ENCODE measurements at regions of chr10 and their contacts with region 1.

Region 1: GRCh38 chr10:70925377-70926225 is 37.2 kb upstream of the PCBD1 start:
- DNase-seq: peak; percentile 87
- H3K4me3 Mint-ChIP-seq: no peak overlapping the region
- H3K27ac Mint-ChIP-seq: no peak overlapping the region
- H3K4me1 Mint-ChIP-seq: peaks cover 6% of the 10 kb centered on the region
- H3K27me3 Mint-ChIP-seq: peaks cover 4% of the 10 kb centered on the region

Region 2: DNA sequence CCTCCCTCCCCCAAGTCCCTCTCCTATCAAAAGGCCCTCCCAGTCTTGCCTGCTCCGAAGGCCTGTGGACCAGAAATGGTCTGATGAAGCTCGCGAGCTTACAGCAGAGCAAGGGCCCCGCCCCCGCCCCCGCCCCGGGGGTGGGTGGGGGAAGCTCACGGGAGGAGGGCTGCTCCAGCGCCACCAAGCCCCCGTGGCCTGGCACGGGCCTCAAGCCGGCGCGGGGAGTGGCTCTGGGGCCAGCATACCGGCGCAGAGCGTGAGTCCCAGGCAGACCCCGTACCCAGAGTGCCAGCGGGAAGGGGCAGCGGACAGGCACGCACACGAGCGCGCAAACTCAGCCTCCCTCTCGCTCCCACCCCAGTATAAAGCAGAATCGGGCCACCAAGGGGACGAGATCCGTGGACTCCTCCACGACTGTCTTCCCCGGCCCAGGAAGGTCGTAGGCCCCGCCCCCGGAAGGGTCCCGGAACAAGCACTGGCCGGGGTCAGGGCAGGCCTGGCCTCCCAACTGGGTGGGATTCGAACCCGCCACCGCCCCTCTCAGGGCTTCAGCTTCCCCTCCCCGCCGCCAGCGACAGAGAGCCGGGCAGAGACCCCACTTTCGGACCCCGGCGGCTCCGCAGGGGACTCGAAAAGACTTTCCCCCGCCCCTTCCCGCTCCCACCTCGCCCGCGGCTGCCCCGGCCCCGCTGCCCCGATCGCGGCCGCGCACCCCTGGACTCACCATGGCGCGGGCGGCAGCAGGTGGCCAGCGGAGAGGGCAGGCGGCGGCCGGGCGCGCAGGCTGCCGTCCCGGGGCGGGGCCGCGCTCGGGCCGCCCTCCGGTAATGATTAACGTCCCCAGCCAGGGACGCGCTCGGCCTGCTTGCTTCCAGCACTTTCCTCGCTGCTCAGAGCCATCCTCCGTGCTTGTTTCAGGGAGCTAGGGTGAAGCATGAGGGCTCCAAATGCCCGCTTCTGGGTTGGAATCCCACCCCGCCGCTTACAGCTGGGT is 37.5 kb before region 1 on chr10 and contains the start of gene PCBD1:
- intact Hi-C with region 1: no loop called
- DNase-seq: peak; percentile 94
- H3K4me3 Mint-ChIP-seq: peak within 1 kb of the TSS; percentile 82
- H3K27ac Mint-ChIP-seq: peak within 1 kb of the TSS; percentile 88
- H3K4me1 Mint-ChIP-seq: peaks cover 23% of the 10 kb centered on the region
- H3K27me3 Mint-ChIP-seq: no peaks in the 10 kb centered on the region
- total RNA-seq, gene PCBD1: 63.2 and 67.7 TPM in 2 replicates

Region 3: GRCh38 chr10:70940834-70941568 is 15.4 kb after region 1 on chr10:
- intact Hi-C with region 1: no loop called
- DNase-seq: no peak
- H3K4me3 Mint-ChIP-seq: no peak overlapping the region
- H3K27ac Mint-ChIP-seq: no peak overlapping the region
- H3K4me1 Mint-ChIP-seq: no peaks in the 10 kb centered on the region
- H3K27me3 Mint-ChIP-seq: no peaks in the 10 kb centered on the region

Region 4: GRCh38 chr10:71209352-71209715 is 283.7 kb after region 1 on chr10:
- intact Hi-C with region 1: loop called (anchors 5 kb)
- DNase-seq: no peak
- H3K4me3 Mint-ChIP-seq: no peak overlapping the region
- H3K27ac Mint-ChIP-seq: no peak overlapping the region
- H3K4me1 Mint-ChIP-seq: peaks cover 3% of the 10 kb centered on the region
- H3K27me3 Mint-ChIP-seq: peaks cover 71% of the 10 kb centered on the region

Region 5: DNA sequence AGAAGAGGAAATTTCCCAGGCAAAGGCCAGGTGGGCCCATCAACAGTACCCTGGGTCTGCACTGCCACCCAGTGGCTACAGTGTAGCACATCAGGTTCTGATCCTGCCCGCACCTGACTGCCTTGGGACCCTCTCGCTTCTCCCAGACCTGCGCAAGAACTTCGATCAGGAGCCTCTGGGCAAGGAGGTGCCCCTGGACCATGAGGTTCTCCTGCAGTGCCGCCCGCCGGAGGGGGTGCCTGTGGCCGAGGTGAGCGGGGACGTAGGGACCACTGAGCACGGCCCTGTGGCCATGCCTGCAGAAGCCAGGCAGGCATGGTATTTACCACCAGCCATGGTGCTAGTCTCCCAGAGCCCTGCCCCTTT is 359.6 kb after region 1 on chr10:
- intact Hi-C with region 1: loop called (anchors 5 kb)
- DNase-seq: peak; percentile 70
- H3K4me3 Mint-ChIP-seq: no peak overlapping the region
- H3K27ac Mint-ChIP-seq: no peak overlapping the region
- H3K4me1 Mint-ChIP-seq: no peaks in the 10 kb centered on the region
- H3K27me3 Mint-ChIP-seq: no peaks in the 10 kb centered on the region